PC-9 (cell line): ENCODE measurements at regions of chr21 and their contacts with region 1.

Region 1: GRCh38 chr21:29298348-29299045 is at the start of gene BACH1:
- DNase-seq: peak; percentile 65 to 82
- H3K4me3 ChIP-seq: peak within 1 kb of the TSS; percentile 92
- H3K27ac ChIP-seq: peak within 1 kb of the TSS; percentile 91
- H3K4me1 ChIP-seq: peaks cover 33% of the 10 kb centered on the region
- H3K27me3 ChIP-seq: no peaks in the 10 kb centered on the region
- CTCF ChIP-seq: 0 out of 2 replicates have a peak, but pooled peaks have one; percentile 40
- total RNA-seq, gene BACH1: 32.3 and 39.9 TPM in 2 replicates

Region 2: GRCh38 chr21:29073222-29074006 is 225.1 kb before region 1 on chr21 and contains the start of gene CCT8:
- CTCF ChIA-PET with region 1: no interaction called
- POLR2A ChIA-PET with region 1: no interaction called
- intact Hi-C with region 1: no loop called
- DNase-seq: peak; percentile 94 to 96
- H3K4me3 ChIP-seq: peak within 1 kb of the TSS; percentile 91
- H3K27ac ChIP-seq: peak within 1 kb of the TSS; percentile 74
- H3K4me1 ChIP-seq: peaks cover 24% of the 10 kb centered on the region; the same call in 1 of the 2 replicates
- H3K27me3 ChIP-seq: no peaks in the 10 kb centered on the region
- CTCF ChIP-seq: no peak
- total RNA-seq, gene CCT8: 123 and 128 TPM in 2 replicates

Region 3: GRCh38 chr21:29091032-29091431 is 207.5 kb before region 1 on chr21:
- CTCF ChIA-PET with region 1: no interaction called
- POLR2A ChIA-PET with region 1: no interaction called
- intact Hi-C with region 1: loop called (anchors 2 kb)
- DNase-seq: peak in 1 of 2 experiments; percentile 67
- H3K4me3 ChIP-seq: no peak overlapping the region
- H3K27ac ChIP-seq: no peak overlapping the region
- H3K4me1 ChIP-seq: peaks cover 16% of the 10 kb centered on the region
- H3K27me3 ChIP-seq: no peaks in the 10 kb centered on the region
- CTCF ChIP-seq: no peak

Region 4: GRCh38 chr21:29164325-29164942 is 134.1 kb before region 1 on chr21:
- CTCF ChIA-PET with region 1: interaction called, 3 read pairs
- POLR2A ChIA-PET with region 1: interaction called, 13 read pairs
- intact Hi-C with region 1: loop called (anchors 1 kb)
- DNase-seq: peak in 1 of 2 experiments; percentile 60
- H3K4me3 ChIP-seq: no peak overlapping the region
- H3K27ac ChIP-seq: no peak overlapping the region
- H3K4me1 ChIP-seq: peaks cover 26% of the 10 kb centered on the region
- H3K27me3 ChIP-seq: no peaks in the 10 kb centered on the region
- CTCF ChIP-seq: peak; percentile 75

Region 5: DNA sequence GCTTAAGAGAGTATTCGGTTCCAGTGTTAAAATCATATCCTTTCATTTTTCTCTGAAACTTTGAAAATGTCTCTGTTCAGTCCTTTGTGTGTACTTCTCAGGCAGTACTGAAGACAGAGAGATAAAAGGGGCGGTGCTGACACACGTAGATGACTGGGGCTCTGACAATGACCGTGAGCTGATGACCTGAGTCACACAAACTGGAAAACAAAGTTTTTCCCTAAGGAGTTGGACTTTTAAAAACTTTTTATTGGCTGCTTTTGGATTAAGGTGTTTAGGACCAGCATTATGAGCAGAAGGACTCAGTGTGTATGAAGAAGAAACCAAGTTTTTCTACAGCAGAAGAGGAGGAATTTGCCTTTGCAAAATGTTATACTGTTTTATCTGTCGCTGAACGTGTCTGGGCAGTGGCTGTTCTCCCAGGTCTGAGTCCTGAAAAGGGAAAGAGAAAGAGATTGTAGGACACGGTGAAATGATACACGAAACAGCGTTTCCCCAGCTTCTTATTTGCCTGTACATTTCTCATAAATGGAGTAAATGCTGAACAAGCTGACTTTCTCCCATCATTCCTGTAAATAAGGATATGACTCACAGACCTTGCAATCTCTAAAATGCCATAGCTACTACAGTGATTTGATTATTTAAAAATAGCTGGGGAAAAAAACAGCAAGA is 116.6 kb before region 1 on chr21:
- CTCF ChIA-PET with region 1: no interaction called
- POLR2A ChIA-PET with region 1: no interaction called
- intact Hi-C with region 1: loop called (anchors 1 kb)
- DNase-seq: peak in 1 of 2 experiments; percentile 88
- H3K4me3 ChIP-seq: peak overlapping the region; percentile 42; the same call in 1 of the 2 replicates
- H3K27ac ChIP-seq: peak overlapping the region; percentile 99
- H3K4me1 ChIP-seq: peaks cover 71% of the 10 kb centered on the region
- H3K27me3 ChIP-seq: no peaks in the 10 kb centered on the region
- CTCF ChIP-seq: no peak

Region 6: DNA sequence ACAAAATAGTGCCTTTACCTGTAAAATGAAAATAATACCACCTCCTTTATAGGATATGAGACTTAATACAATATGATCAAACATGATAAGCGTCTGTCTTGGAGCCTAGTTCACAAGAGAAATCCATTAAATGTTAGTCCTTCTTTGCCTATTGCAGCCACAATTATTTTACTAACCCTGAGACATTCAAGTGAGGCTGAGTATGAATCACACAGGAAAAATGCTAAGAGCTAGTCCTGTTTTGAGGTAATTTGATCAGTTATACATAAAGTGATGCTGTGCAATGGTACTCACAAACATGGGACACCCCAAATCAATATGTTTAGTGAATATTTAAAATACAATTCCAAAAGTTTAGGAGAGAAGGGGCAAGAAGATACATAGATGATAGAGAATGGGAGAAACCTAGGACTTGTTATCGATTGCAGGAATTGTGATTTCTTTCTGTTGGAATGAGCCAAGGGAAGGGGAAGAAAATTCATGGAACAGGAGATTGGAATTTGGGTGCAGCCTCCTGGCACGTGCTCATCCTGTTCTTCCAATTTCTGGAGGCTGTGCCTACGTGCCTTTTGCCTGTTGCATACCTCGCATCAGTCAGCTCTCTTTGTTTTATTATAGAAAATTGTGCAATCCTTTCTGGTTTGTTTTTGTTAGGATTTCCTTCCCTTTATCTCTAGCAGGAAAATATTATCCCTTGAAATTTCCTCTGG is 39.7 kb before region 1 on chr21:
- CTCF ChIA-PET with region 1: no interaction called
- POLR2A ChIA-PET with region 1: no interaction called
- intact Hi-C with region 1: loop called (anchors 2 kb)
- DNase-seq: peak; percentile 37 to 68
- H3K4me3 ChIP-seq: 0 out of 2 replicates have a peak overlapping the region, but pooled peaks have one; percentile 22
- H3K27ac ChIP-seq: peak overlapping the region; percentile 80
- H3K4me1 ChIP-seq: peaks cover 35% of the 10 kb centered on the region
- H3K27me3 ChIP-seq: no peaks in the 10 kb centered on the region
- CTCF ChIP-seq: no peak

Region 7: DNA sequence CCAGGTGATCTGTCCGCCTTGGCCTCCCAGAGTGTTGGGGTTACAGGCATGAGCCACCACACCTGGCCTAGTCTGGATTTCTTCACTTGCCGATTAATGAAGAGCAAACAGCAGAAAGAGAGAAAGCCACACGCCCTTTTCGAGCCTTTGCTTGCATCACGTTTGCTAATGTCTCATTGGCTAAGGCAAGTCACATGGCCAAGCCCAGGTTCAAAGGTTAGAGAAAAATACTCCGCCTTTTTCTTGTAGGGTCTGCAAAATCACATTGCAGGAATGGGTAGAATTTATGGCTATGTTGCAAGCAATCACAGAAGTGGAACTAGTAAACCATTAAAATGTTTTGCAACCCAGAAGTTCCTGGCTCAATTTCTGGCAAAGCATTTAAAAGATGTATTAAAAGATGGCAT is 26.6 kb before region 1 on chr21:
- CTCF ChIA-PET with region 1: no interaction called
- POLR2A ChIA-PET with region 1: no interaction called
- intact Hi-C with region 1: no loop called
- DNase-seq: no peak
- H3K4me3 ChIP-seq: no peak overlapping the region
- H3K27ac ChIP-seq: no peak overlapping the region
- H3K4me1 ChIP-seq: no peaks in the 10 kb centered on the region
- H3K27me3 ChIP-seq: no peaks in the 10 kb centered on the region
- CTCF ChIP-seq: no peak

Region 8: GRCh38 chr21:29318354-29318753 is 19.9 kb after region 1 on chr21:
- CTCF ChIA-PET with region 1: no interaction called
- POLR2A ChIA-PET with region 1: no interaction called
- intact Hi-C with region 1: no loop called
- DNase-seq: no peak
- H3K4me3 ChIP-seq: no peak overlapping the region
- H3K27ac ChIP-seq: no peak overlapping the region
- H3K4me1 ChIP-seq: 0 out of 2 replicates have a peak, but pooled peaks cover 7% of the 10 kb centered on the region
- H3K27me3 ChIP-seq: no peaks in the 10 kb centered on the region
- CTCF ChIP-seq: no peak

Region 9: GRCh38 chr21:29342363-29342957 is 44.0 kb after region 1 on chr21:
- CTCF ChIA-PET with region 1: no interaction called
- POLR2A ChIA-PET with region 1: no interaction called
- intact Hi-C with region 1: loop called (anchors 5 kb)
- DNase-seq: peak in 1 of 2 experiments; percentile 37
- H3K4me3 ChIP-seq: no peak overlapping the region
- H3K27ac ChIP-seq: 0 out of 2 replicates have a peak overlapping the region, but pooled peaks have one; percentile 41
- H3K4me1 ChIP-seq: no peaks in the 10 kb centered on the region
- H3K27me3 ChIP-seq: no peaks in the 10 kb centered on the region
- CTCF ChIP-seq: no peak